Left ventricle myocardium inferior (tissue), 1 donor: ENCODE measurements at regions of chr17 and their contacts with region 1.

Region 1: GRCh38 chr17:74305865-74306654 is 20.0 kb upstream of the KIF19 start:
- DNase-seq: no peak
- H3K4me3 ChIP-seq: no peak overlapping the region
- H3K27ac ChIP-seq: no peak overlapping the region
- H3K4me1 ChIP-seq: peaks cover 12% of the 10 kb centered on the region
- H3K27me3 ChIP-seq: no peaks in the 10 kb centered on the region
- CTCF ChIP-seq: peak; percentile 19

Region 2: GRCh38 chr17:74259667-74260524 is 46.2 kb before region 1 on chr17:
- intact Hi-C with region 1: no loop called
- DNase-seq: no peak
- H3K4me3 ChIP-seq: no peak overlapping the region
- H3K27ac ChIP-seq: no peak overlapping the region
- H3K4me1 ChIP-seq: no peaks in the 10 kb centered on the region
- H3K27me3 ChIP-seq: no peaks in the 10 kb centered on the region
- CTCF ChIP-seq: no peak

Region 3: GRCh38 chr17:74354123-74354522 is 48.1 kb after region 1 on chr17:
- intact Hi-C with region 1: loop called (anchors 10 kb)
- DNase-seq: peak; percentile 45
- H3K4me3 ChIP-seq: no peak overlapping the region
- H3K27ac ChIP-seq: no peak overlapping the region
- H3K4me1 ChIP-seq: peaks cover 18% of the 10 kb centered on the region
- H3K27me3 ChIP-seq: peaks cover 95% of the 10 kb centered on the region
- CTCF ChIP-seq: peak; percentile 65

Region 4: GRCh38 chr17:74394977-74395376 is 88.9 kb after region 1 on chr17:
- intact Hi-C with region 1: no loop called
- DNase-seq: no peak
- H3K4me3 ChIP-seq: no peak overlapping the region
- H3K27ac ChIP-seq: no peak overlapping the region
- H3K4me1 ChIP-seq: peaks cover 7% of the 10 kb centered on the region
- H3K27me3 ChIP-seq: no peaks in the 10 kb centered on the region
- CTCF ChIP-seq: no peak

Region 5: GRCh38 chr17:74493381-74493833 is 187.3 kb after region 1 on chr17:
- intact Hi-C with region 1: loop called (anchors 10 kb)
- DNase-seq: peak; percentile 62
- H3K4me3 ChIP-seq: no peak overlapping the region
- H3K27ac ChIP-seq: no peak overlapping the region
- H3K4me1 ChIP-seq: no peaks in the 10 kb centered on the region
- H3K27me3 ChIP-seq: peaks cover 42% of the 10 kb centered on the region
- CTCF ChIP-seq: peak; percentile 90